Calu3 (cell line): ENCODE measurements at regions of chr3 and their contacts with region 1.

Region 1: DNA sequence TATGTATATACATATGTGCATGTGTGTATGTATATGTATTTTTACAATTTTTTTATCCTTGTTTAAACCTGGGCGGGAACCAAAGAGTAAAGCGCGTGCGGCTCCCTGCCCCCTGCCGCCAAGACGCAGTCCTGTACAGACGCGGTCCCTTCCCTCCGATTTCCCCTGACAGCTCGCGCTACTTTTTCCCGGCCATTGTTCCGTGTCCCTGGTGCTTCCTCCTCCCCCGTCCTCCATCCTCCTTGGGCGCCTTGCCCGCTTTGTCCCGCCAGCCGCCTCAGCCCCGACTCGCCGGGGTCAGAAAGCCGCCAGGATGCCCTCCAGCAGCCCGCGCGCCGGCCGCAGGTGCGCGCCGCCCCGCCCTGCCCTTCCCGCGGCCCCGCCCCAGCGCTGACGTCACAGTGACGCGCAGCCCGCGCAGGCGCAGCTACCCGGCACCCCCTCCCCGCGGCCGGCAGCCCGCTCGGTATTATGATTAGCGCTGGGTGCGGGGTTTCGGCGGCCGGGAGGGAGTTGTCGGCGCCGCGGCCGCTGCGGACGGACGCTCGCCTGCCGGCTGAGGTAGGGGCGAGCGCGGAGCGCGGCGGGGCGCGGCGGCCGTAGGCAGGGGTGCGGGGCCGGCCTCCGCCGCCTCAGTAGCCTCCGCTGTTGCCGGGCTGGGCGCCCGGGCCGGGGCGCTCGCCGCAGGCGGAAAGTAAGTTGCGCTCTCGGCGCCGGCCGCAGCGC is at the start of gene SNRK:
- DNase-seq: peak; percentile 95
- H3K4me3 Mint-ChIP-seq: peak within 1 kb of the TSS; percentile 77
- H3K27ac Mint-ChIP-seq: peak within 1 kb of the TSS; percentile 89
- H3K4me1 Mint-ChIP-seq: peaks cover 30% of the 10 kb centered on the region
- H3K27me3 Mint-ChIP-seq: no peaks in the 10 kb centered on the region
- CTCF ChIP-seq: no peak
- total RNA-seq, gene SNRK: 21.0 and 21.8 TPM in 2 replicates

Region 2: GRCh38 chr3:43178891-43179366 is 107.3 kb before region 1 on chr3:
- CTCF ChIA-PET with region 1: no interaction called
- intact Hi-C with region 1: loop called (anchors 2 kb)
- DNase-seq: peak; percentile 75
- H3K4me3 Mint-ChIP-seq: no peak overlapping the region
- H3K27ac Mint-ChIP-seq: peak overlapping the region; percentile 78
- H3K4me1 Mint-ChIP-seq: peaks cover 65% of the 10 kb centered on the region
- H3K27me3 Mint-ChIP-seq: no peaks in the 10 kb centered on the region
- CTCF ChIP-seq: no peak

Region 3: DNA sequence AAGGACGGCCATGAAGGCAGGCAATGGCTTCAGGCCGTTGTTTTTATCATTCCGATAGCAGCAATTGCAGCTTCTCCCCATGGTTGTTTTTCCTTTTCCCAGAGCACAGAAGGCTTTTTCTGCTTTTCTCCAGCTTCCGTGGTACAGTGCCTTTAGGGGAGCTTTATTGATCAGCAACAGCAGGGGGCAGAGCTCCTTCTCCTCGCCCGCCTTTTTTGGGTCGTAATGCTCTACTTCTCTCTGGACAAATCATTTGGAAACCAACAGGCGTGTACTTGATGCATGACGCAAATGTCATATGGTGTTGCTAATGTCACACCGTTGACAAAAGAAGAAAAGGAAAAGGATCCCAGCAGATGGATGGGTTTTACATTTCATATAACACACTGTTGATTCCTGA is 79.6 kb before region 1 on chr3:
- CTCF ChIA-PET with region 1: no interaction called
- intact Hi-C with region 1: no loop called
- DNase-seq: no peak
- H3K4me3 Mint-ChIP-seq: no peak overlapping the region
- H3K27ac Mint-ChIP-seq: no peak overlapping the region
- H3K4me1 Mint-ChIP-seq: peaks cover 22% of the 10 kb centered on the region
- H3K27me3 Mint-ChIP-seq: no peaks in the 10 kb centered on the region
- CTCF ChIP-seq: no peak

Region 4: DNA sequence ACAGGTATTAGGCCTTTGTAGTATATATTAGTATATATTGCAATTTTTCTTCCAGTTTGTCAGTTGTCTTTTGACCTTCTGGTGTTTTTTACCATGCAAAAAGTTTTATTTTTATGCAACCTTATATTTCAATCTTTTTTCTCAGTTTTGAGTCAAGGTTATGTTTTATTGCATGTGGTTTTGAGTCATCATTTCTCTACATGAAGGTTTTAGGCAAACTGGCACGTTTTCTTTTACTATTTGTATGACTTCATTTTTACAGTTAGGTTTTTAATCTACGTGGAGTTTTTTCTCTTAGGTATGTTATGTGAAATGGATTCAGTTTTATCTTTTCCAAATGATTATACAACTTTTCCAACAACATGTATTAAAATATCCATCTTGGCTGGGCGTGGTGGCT is 1015.5 kb after region 1 on chr3:
- CTCF ChIA-PET with region 1: interaction called, 13 read pairs
- intact Hi-C with region 1: no loop called
- DNase-seq: no peak
- H3K4me3 Mint-ChIP-seq: no peak overlapping the region
- H3K27ac Mint-ChIP-seq: no peak overlapping the region
- H3K4me1 Mint-ChIP-seq: no peaks in the 10 kb centered on the region
- H3K27me3 Mint-ChIP-seq: no peaks in the 10 kb centered on the region
- CTCF ChIP-seq: no peak